Aorta (tissue), 5 donors: ENCODE measurements at regions of chr5 and their contacts with region 1.

Region 1: DNA sequence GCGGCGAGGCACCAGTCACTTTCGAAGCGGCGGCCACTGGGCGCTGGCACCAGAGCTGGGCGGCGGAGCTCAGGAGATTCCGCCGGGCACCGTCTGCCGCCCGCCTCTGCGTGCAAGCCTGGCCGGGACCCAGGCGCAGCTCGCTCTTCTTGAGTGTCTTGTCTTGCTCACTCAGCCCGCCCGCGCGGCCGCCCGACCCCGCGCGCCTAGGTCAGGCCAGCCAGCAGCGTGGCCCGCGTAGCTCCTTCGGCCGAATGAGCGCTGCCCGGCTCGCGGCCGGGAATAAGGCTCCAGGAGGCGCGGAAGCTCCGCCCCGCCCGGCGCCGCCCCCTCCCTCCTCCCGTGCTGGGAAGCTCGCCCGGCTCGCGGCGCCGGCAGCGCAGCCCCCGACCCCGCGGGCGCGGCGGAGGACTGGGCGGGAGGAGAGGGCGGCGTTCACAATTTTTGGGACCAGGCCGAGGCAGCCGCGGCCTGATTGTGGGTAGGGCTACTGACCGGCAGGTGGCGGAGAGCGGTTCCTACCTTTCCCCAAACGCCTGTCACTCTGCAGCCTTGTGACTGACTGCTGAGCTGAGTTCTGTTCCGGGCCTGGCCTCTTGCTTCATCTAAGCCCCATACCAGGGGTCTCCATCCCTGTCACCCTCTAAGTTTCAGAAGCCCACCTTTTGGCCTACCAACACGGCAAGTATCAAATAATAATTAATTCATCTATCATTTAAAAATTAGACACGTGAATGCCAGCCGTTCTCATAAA is at the start of gene HBEGF:
- DNase-seq: peak; percentile 87 to 94
- ATAC-seq: peak; percentile 90
- H3K4me3 ChIP-seq: peak within 1 kb of the TSS; percentile 36 to 56
- H3K27ac ChIP-seq: peak within 1 kb of the TSS in 1 of 2 donors; percentile 44
- H3K4me1 ChIP-seq: no peaks in the 10 kb centered on the region
- H3K27me3 ChIP-seq: no peaks in the 10 kb centered on the region
- total RNA-seq, gene HBEGF: 14.5 to 30.2 TPM

Region 2: DNA sequence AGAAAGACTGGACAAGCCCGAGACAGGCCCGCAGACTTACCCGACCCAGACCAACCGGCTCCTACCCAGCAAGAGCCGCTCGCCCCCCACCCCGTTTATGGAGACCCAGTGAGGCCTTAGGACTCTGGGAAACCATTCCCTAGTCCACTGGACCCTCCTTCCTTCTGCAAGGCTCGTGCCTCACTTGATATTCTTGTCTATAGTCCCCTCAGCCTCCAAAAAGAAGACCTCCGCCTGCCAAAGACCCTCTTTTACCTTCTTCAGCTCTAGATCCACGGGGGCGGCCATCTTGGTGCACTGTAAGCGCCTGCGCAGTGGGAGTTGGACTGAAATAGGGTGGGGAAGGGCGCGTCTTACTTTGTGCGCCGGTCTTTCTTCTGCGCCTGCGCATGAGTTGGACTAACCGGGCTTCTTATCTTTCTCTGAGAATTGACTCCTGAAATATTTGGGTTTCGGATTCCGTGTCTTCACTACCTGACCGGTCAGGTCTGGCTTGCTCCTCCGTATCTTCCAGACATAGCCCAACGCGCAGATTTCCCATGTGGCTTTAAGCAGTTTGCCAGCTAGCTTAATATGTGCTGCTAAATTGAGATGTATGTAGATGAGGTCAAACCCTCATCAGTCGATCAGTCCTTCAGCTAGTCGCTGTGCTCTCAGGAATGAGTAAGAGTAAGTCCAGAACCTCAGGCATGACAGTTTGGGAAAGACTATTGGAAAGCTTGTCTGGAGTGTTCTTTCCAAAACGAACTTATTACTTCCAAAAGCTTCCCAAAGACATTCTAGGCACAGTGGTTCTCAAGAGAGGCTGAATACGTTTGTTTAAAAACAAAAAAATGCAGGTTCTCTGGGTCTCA is 43.5 kb before region 1 on chr5 and contains the start of gene PFDN1:
- intact Hi-C with region 1: loop called (anchors 5 kb)
- DNase-seq: peak; percentile 96
- ATAC-seq: peak; percentile 98
- H3K4me3 ChIP-seq: peak within 1 kb of the TSS; percentile 71 to 82
- H3K27ac ChIP-seq: peak within 1 kb of the TSS; percentile 28 to 93
- H3K4me1 ChIP-seq: no peaks in the 10 kb centered on the region
- H3K27me3 ChIP-seq: no peaks in the 10 kb centered on the region
- total RNA-seq, gene PFDN1: 31.8 to 43.6 TPM